Panc1 (cell line): ENCODE measurements at regions of chr12 and their contacts with region 1.

Region 1: DNA sequence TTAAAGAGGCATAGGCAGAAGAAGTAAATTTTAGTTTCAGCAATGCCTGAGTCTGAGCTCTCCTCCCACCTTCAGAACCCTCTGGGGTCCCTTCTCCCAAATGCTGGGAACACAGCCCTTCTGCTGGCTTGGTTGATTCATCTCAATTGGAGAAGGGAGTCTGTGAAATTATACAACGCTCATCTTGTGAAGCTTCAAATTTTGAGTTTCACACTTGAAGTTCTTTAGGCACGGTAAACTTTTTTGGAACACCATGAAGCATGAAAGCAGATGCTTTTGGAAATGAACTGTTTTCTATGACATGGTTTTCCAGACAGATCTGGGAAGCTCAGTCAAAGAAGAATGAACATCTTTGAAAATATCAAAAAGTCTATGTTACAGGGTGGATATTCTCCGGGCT is 69.9 kb downstream of the TBK1 start:
- DNase-seq: no peak
- ATAC-seq: no peak
- H3K4me3 ChIP-seq: no peak overlapping the region
- H3K27ac ChIP-seq: no peak overlapping the region
- H3K4me1 ChIP-seq: no peaks in the 10 kb centered on the region
- H3K27me3 ChIP-seq: no peaks in the 10 kb centered on the region
- CTCF ChIP-seq: no peak

Region 2: DNA sequence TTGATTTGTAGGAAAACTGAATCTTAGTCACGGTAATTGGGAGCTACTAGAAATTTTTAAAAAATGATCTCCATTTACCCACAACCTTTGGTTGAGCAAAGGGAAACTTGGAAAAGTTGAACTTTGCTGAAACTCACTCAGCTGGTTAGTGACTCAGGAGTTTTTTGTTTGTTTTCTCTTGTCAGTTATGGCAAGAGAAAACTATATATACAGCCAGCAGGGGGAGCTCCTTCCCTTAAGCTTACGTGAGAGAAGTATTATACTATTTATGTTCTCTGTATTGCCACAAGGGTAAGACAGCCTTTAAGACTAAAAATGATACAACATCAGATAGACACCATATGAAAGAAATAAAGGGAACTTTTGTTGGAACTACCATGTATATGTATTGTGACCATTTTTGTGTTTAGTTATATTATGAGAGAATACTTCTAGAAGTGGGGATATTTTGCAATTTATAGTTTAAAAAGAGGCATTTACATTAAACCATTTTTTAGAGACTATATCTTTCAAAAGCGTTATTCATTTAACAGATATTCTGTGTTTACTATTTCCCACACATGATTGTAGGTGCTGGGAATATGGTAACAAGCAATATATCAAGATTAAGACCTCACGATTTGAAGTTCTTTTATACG is 274.5 kb after region 1 on chr12:
- CTCF ChIA-PET with region 1: interaction called, 12 read pairs
- POLR2A ChIA-PET with region 1: no interaction called
- in situ Hi-C with region 1: no loop called
- intact Hi-C with region 1: no loop called
- DNase-seq: peak; percentile 72
- ATAC-seq: peak; percentile 88
- H3K4me3 ChIP-seq: no peak overlapping the region
- H3K27ac ChIP-seq: peak overlapping the region; percentile 12; the same call in 1 of the 2 replicates
- H3K4me1 ChIP-seq: peaks cover 17% of the 10 kb centered on the region; the same call in 1 of the 2 replicates
- H3K27me3 ChIP-seq: no peaks in the 10 kb centered on the region
- CTCF ChIP-seq: peak; percentile 84; the same call in 1 of the 2 replicates